ENCODE measurements at regions of chr4 and their contacts with region 1.

Region 1: GRCh38 chr4:42282081-42282901 is 115.0 kb upstream of the SHISA3 start:
- DNase-seq: peak; percentile 28 to 54
- ATAC-seq: peak; percentile 93
- H3K4me3 ChIP-seq: peak overlapping the region in 1 of 4 donors; percentile 24
- H3K27ac ChIP-seq: peak overlapping the region in 2 of 4 donors; percentile 59 to 64
- H3K4me1 ChIP-seq: peaks cover 0 to 6% of the 10 kb centered on the region in 2 donors
- H3K27me3 ChIP-seq: no peaks in the 10 kb centered on the region
- CTCF ChIP-seq: peak; percentile 39 to 75 (median 58)
- POLR2A ChIP-seq: no peak

Region 2: DNA sequence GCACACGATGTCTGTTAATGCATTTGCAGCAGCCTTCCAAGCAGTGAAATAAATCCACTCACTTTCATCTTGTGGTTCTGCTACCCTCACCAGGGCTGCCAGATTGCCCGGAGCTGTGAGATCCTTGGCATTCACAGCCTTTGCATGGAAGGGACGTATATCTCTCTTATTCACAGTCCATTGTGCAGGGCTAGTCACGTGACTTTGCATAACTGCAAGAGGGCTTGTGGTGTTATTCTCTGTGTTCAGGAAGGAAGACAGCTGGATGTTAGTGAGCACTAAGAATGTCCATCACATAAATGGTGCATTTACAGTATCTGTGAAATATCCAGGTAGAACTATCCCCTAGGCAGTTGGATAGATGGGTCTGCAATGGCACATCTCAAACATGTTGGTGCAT is 33.3 kb before region 1 on chr4:
- in situ Hi-C with region 1: no loop called
- intact Hi-C with region 1: no loop called
- DNase-seq: no peak
- ATAC-seq: no peak
- H3K4me3 ChIP-seq: no peak overlapping the region
- H3K27ac ChIP-seq: no peak overlapping the region
- H3K4me1 ChIP-seq: no peaks in the 10 kb centered on the region
- H3K27me3 ChIP-seq: no peaks in the 10 kb centered on the region
- CTCF ChIP-seq: no peak
- POLR2A ChIP-seq: no peak

Region 3: DNA sequence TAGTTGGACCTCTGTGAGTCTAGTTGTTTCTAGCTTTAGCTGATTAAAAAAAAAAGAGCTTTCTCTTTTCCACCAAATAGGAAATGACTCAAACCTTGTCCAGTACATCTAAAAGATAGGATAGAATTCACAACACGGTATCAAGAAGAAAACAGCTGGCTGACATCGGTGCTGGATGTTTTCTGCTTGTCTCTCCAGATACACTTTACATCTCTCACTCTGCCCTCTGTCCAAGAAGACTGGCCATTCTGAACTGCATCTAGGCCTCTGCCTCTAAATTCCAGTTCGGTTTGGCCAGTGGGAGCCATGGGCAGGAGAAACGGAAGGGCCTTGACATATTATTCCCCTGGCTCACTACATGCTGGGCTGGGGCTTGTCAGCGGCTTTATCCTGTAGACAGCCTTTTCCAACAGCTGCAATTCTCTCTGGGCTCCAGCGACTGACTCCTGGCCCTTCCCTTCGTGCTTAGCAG is 57.7 kb after region 1 on chr4:
- in situ Hi-C with region 1: no loop called
- intact Hi-C with region 1: loop called (anchors 10 kb)
- DNase-seq: no peak
- ATAC-seq: peak; percentile 56
- H3K4me3 ChIP-seq: no peak overlapping the region
- H3K27ac ChIP-seq: peak overlapping the region; percentile 37 to 73 (median 56)
- H3K4me1 ChIP-seq: peaks cover 5% of the 10 kb centered on the region in 2 donors
- H3K27me3 ChIP-seq: no peaks in the 10 kb centered on the region
- CTCF ChIP-seq: no peak
- POLR2A ChIP-seq: no peak

Region 4: DNA sequence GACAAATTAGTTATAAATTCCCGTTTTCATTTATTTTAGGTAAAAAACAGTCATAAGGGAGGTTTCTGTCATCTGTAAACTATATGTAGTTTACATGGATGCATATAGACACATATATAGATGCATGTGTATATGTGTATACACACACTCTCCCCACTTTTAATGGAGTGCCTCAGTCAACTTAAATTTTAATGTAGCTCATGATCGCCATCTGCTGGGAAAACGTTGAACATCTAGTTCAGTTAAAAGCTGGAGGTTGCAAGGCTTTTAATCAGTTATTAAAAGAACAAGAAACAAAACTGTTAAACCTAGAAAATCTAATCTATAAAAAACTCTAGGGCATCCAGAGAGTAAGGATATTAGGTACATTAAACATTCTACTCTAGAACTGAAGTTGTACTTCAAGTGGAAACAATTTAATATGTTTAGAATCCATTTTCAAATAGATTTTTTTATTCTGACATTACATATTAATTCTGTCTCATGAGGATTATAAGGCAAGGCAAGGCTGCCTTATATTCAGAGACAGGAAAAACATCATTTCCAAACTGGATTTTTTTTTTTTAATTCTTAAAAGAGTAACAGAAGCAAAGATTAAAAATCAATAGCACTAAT is 237.6 kb after region 1 on chr4:
- in situ Hi-C with region 1: loop called (anchors 5 kb)
- intact Hi-C with region 1: loop called (anchors 1 kb)
- DNase-seq: no peak
- ATAC-seq: peak; percentile 48 to 71
- H3K4me3 ChIP-seq: no peak overlapping the region
- H3K27ac ChIP-seq: no peak overlapping the region
- H3K4me1 ChIP-seq: peaks cover 21 to 29% of the 10 kb centered on the region in 2 donors
- H3K27me3 ChIP-seq: no peaks in the 10 kb centered on the region
- CTCF ChIP-seq: peak; percentile 55 to 73 (median 64)
- POLR2A ChIP-seq: no peak

Region 5: DNA sequence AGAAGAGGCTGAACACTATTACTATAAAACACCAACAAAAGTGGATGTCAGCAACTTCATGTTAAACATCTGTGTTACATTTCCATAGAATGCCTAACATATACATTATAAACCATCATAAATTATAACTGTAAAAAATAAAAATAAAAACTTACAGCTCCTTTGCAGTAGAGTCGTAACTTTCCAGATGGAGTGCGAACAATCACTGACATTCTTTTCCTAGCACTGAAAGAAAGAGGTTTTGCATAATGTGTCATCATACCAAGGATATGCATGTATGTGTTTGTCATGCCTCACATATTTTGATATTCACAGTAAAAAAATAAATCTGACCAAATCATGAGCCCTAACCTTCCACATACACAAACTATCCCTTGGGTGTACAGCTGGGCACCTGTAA is 261.5 kb after region 1 on chr4:
- in situ Hi-C with region 1: no loop called
- intact Hi-C with region 1: no loop called
- DNase-seq: no peak
- ATAC-seq: no peak
- H3K4me3 ChIP-seq: no peak overlapping the region
- H3K27ac ChIP-seq: peak overlapping the region in 1 of 4 donors; percentile 9
- H3K4me1 ChIP-seq: no peaks in the 10 kb centered on the region
- H3K27me3 ChIP-seq: no peaks in the 10 kb centered on the region
- CTCF ChIP-seq: no peak
- POLR2A ChIP-seq: no peak

Region 6: GRCh38 chr4:42865572-42866189 is 583.4 kb after region 1 on chr4:
- in situ Hi-C with region 1: loop called in 1 of 4 experiments (anchors 10 kb)
- intact Hi-C with region 1: no loop called
- DNase-seq: peak in 1 of 2 donors; percentile 23
- ATAC-seq: peak in 1 of 2 donors; percentile 45
- H3K4me3 ChIP-seq: no peak overlapping the region
- H3K27ac ChIP-seq: no peak overlapping the region
- H3K4me1 ChIP-seq: no peaks in the 10 kb centered on the region
- H3K27me3 ChIP-seq: no peaks in the 10 kb centered on the region
- CTCF ChIP-seq: peak; percentile 59 to 80 (median 65)
- POLR2A ChIP-seq: no peak